SK-N-SH (cell line): ENCODE measurements at regions of chr12 and their contacts with region 1.

Region 1: DNA sequence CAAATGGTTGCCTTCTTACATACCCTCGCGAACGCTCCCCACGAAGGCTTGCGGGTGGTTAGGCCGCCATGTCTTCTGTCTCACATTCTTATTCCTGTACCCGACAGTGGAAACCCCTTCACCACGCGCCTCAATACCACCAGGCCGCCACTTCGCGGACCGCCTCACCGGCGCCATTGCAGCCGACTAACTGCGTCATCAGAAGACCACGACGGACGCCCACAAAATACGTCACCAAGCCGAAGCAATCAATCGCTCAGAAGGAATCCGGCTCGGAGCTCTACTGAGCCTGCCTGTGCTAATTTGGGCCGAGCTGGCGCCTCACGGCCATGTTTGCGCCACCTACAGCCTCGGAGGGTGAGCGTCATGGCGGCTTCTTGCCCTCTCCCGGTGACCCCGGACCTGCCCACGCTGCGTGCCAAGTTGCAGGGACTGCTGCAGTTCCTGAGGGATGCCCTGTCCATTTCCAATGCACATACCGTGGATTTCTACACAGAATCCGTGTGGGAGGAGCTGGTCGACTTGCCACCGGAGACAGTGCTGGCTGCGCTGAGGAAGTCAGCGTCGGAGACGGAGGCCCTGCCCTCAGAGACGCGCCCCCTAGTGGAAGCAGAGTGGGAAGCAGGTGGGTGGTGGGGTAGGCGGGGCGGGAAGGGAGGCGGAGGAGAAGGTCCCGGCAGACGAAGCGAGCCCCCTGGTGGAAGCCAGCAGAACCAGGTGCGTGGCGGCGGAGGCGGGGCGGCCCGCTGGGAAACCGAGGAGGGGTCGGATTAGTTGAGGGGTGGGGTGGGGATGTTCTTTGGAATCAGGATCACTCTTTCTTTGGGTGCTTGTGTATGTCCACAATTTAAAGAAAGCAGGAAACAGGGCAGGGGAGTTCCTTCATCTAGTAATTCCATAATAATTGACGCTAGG is at the starts of genes CCDC59 and METTL25:
- DNase-seq: peak; percentile 94
- H3K4me3 ChIP-seq: peak within 1 kb of the TSS; percentile 95 to 98
- H3K27ac ChIP-seq: peak within 1 kb of the TSS; percentile 87 to 98
- H3K4me1 ChIP-seq: peaks cover 5 to 12% of the 10 kb centered on the region in 2 experiments; a peak in 3 of 4 replicates
- H3K27me3 ChIP-seq: no peaks in the 10 kb centered on the region
- CTCF ChIP-seq: peak; percentile 96
- EP300 ChIP-seq: peak in 1 of 2 experiments; percentile 35; a peak in 1 of 4 replicates
- RAD21 ChIP-seq: peak; percentile 53
- polyA plus RNA-seq, gene CCDC59: 16.3 and 28.0 TPM in 2 replicates
- polyA plus RNA-seq, gene METTL25: 3.0 and 3.2 TPM in 2 replicates

Region 2: GRCh38 chr12:81644503-81644902 is 714.0 kb before region 1 on chr12:
- CTCF ChIA-PET with region 1: interaction called, 14 read pairs
- POLR2A ChIA-PET with region 1: no interaction called
- DNase-seq: peak; percentile 49
- H3K4me3 ChIP-seq: no peak overlapping the region; a peak in 1 of 4 replicates
- H3K27ac ChIP-seq: no peak overlapping the region
- H3K4me1 ChIP-seq: no peaks in the 10 kb centered on the region
- H3K27me3 ChIP-seq: no peaks in the 10 kb centered on the region
- CTCF ChIP-seq: peak; percentile 70
- EP300 ChIP-seq: no peak
- RAD21 ChIP-seq: peak; percentile 86